Activated B cell treated with CpG ODN at 0.5 μM for 24 hours (primary cell): ENCODE measurements at regions of chr4 and their contacts with region 1.

Region 1: DNA sequence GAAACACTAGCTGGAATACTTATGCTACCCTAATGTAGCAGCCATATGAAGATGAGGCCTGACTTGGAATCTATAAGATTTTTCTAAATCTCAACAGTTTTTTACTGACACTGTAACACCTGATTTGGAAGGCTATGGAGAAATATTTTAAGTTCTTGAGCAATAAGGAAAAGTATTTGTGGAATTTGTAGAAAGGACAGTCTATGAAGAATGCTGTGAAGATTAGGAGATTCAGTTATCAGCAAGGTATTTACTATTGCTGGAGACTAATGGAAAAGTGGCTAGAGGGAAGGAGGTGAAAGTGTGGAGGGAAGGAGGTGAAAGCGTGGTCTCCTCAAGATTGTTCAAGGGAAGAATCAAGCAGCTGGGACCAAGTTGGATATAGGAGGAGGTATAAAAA is 190.0 kb upstream of the EMCN start:
- DNase-seq: no peak
- ATAC-seq: no peak
- H3K4me3 Mint-ChIP-seq: no peak overlapping the region
- H3K27ac Mint-ChIP-seq: no peak overlapping the region
- H3K4me1 Mint-ChIP-seq: no peaks in the 10 kb centered on the region
- H3K27me3 Mint-ChIP-seq: no peaks in the 10 kb centered on the region
- CTCF ChIP-seq: no peak

Region 2: DNA sequence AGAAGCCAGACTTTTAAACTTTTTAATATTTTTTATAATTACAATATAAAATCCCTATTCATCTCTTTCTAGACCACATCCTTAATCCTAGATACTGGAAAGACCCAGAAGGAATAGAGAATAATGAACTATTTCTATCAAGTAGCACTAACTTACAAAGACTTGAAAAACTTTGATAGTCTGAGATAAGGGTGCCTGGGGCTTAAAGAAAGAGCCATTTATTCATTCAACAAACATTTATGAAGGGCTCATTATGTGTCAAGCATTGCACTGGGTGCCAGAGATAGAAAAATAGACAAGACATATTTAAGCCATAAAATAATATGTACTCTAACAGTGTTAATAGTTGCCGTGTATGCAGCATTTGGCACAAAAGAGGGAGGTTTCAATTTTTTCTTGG is 11.9 kb before region 1 on chr4:
- CTCF ChIA-PET with region 1: no interaction called
- POLR2A ChIA-PET with region 1: interaction called, 10 read pairs
- intact Hi-C with region 1: no loop called
- DNase-seq: no peak
- ATAC-seq: no peak
- H3K4me3 Mint-ChIP-seq: no peak overlapping the region
- H3K27ac Mint-ChIP-seq: no peak overlapping the region
- H3K4me1 Mint-ChIP-seq: no peaks in the 10 kb centered on the region
- H3K27me3 Mint-ChIP-seq: peaks cover 4% of the 10 kb centered on the region
- CTCF ChIP-seq: no peak